ENCODE measurements at regions of chr6 and their contacts with region 1.

Region 1: DNA sequence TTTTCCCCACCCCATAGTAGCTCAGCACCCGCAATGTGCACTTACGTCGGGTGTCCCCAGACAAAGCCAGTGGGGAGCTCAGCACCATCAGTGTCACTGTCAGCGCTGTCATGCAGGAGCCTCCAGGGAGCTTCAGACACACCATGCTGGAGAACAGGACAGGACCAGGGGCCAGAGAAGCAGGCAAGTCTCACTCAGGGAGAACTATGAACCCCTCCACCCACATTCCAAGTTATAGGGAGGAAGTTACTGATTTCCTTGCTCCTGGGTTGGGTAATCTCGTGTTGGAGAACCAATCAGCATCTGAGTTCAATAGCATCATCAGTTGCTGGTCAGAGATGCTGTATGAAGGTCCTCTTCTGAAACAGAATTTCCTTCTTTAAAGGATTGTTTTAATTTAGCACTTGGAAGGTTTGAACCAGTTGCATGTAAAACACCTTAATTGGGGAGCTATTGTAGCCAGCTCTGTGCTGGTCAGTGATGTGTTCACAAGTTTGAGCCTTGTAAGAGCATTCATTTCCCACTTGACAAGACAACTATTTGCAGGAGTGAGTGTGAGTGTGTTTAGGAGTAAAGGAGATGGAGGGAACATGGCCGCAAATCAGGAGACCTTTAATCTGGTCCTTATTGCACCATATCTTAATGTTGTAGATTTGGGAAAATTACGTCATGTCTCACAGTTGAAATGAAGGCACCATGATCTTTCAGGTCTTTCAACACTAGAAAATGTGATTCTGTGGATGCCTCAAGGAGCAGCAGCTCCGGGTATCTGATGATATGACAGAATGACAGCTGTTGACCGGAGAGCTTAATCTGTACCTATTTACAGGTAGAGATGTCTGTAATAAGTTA is at the start of gene HLA-DRB1:
- DNase-seq: peak; percentile 32 to 71 (median 50)
- ATAC-seq: peak; percentile 93 to 98 (median 97)
- H3K4me3 ChIP-seq: peak within 1 kb of the TSS in 7 of 12 donors; percentile 2 to 59 (median 47)
- H3K27ac ChIP-seq: peak within 1 kb of the TSS in 7 of 12 donors; percentile 64 to 85 (median 72)
- H3K4me1 ChIP-seq: no peaks in the 10 kb centered on the region
- H3K27me3 ChIP-seq: no peaks in the 10 kb centered on the region
- CTCF ChIP-seq: no peak
- POLR2A ChIP-seq: no peak
- total RNA-seq, gene HLA-DRB1: 12.3 to 404 (median 86.3) TPM

Region 2: GRCh38 chr6:32439602-32440214 is 150.1 kb before region 1 on chr6 and contains the start of gene HLA-DRA:
- intact Hi-C with region 1: loop called in 1 of 10 experiments (anchors 10 kb)
- DNase-seq: peak in 2 of 5 donors; percentile 26 to 55
- ATAC-seq: peak; percentile 75 to 90 (median 84)
- H3K4me3 ChIP-seq: peak within 1 kb of the TSS; percentile 9 to 68 (median 56)
- H3K27ac ChIP-seq: peak within 1 kb of the TSS in 11 of 12 donors; percentile 2 to 94 (median 79)
- H3K4me1 ChIP-seq: peaks cover 0 to 46% (median 0%) of the 10 kb centered on the region in 12 donors
- H3K27me3 ChIP-seq: peaks cover 0 to 2% (median 0%) of the 10 kb centered on the region in 9 donors
- CTCF ChIP-seq: no peak
- POLR2A ChIP-seq: peak in 1 of 2 donors; percentile 24
- total RNA-seq, gene HLA-DRA: 20.0 to 1,108 (median 87.0) TPM

Region 3: DNA sequence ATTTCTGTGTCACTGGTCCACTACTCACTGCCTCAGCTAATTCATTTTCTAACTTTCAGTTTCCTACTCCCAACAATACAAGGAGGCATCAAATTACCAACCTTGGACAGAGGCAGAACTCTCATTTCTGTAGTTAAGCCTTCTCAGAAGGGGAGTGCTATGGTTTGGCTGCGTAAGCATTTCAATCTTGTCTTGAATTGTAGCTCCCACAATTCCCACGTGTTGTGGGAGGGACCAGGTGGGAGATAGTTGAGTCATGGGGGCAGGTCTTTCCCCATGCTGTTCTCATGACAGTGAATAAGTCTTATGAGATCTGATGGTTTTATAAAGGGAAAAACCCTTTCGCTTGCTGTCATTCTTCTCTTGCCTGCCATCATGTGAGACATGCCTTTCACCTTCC is 127.2 kb before region 1 on chr6:
- intact Hi-C with region 1: no loop called
- DNase-seq: no peak
- ATAC-seq: no peak
- H3K4me3 ChIP-seq: no peak overlapping the region
- H3K27ac ChIP-seq: no peak overlapping the region
- H3K4me1 ChIP-seq: no peaks in the 10 kb centered on the region
- H3K27me3 ChIP-seq: peaks cover 0 to 26% (median 0%) of the 10 kb centered on the region in 9 donors
- CTCF ChIP-seq: no peak
- POLR2A ChIP-seq: no peak

Region 4: DNA sequence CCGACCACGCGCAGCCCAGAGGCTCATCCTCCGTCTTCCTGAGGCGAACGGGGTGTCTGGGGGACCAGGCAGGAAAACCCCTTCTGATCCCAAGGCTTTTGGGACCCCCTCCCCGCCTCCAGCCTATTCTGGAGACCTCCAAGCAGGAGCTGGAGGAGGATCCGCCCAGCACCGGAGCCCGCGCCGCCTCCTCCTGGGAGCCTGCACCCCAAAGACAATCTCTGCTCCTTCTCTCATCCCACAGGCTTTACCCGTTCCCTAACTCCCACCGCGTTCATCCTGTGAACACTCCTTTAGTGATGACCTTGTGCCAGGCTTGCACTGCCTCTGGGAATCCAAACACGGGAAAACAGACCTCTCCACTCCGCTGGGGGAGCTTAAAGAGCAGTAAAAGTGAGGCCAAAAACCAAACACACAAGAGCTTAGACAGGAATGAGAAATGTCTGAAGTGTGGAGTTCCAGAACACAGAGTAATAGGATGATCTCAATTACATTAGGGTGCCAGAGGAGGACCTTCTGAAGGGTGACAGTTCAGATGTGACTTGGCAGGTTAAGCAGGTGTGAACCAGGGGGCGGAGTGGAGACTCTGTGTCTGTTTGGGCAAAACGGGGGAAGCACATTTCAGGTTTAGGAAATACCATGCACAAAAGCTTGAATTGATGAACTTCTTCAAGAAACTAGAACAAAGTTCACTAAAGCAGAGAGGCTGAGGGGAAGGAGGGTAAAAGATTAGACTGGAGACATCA is 67.3 kb before region 1 on chr6:
- intact Hi-C with region 1: loop called in 3 of 10 experiments (anchors 5 to 10 kb)
- DNase-seq: no peak
- ATAC-seq: no peak
- H3K4me3 ChIP-seq: peak overlapping the region in 4 of 12 donors; percentile 29 to 38 (median 34)
- H3K27ac ChIP-seq: peak overlapping the region in 4 of 12 donors; percentile 2 to 57 (median 36)
- H3K4me1 ChIP-seq: peaks cover 0 to 6% (median 0%) of the 10 kb centered on the region in 12 donors
- H3K27me3 ChIP-seq: peaks cover 0 to 10% (median 0%) of the 10 kb centered on the region in 9 donors
- CTCF ChIP-seq: no peak
- POLR2A ChIP-seq: no peak

Region 5: DNA sequence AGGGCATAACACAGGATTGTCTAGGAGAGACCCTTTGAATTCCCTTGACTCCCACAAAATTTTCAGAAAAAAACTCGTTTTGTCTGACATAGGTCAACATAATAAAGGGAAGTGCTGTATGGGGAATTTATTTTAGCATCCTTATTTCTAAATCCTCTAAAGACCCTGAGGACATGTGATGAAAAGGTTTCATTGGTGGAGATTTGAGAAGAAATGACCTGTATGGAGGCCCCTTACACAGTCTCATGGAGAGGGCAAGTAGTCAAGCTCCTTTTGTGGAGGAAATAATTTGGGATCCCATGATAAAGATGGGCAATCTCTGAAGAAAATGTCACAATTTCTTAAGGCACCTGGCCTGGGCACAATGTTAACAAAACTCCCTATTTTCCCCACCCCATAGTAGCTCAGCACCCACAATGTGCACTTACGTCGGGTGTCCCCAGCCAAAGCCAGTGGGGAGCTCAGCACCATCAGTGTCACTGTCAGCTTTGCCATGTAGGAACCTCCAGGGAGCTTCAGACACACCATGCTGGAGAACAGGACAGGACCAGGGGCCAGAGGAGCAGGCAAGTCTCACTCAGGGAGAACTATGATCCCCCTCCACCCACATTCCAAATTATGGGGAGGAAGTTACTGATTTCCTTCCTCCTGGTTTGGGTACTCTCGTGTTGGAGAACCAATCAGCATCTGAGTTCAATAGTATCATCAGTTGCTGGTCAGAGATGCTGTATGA is 60.0 kb before region 1 on chr6 and contains the start of gene HLA-DRB5:
- intact Hi-C with region 1: loop called in 4 of 10 experiments (anchors 5 to 10 kb)
- DNase-seq: peak in 3 of 5 donors; percentile 33 to 63 (median 52)
- ATAC-seq: peak; percentile 58 to 99 (median 78)
- H3K4me3 ChIP-seq: peak within 1 kb of the TSS in 6 of 12 donors; percentile 12 to 56 (median 46)
- H3K27ac ChIP-seq: peak within 1 kb of the TSS in 10 of 12 donors; percentile 43 to 84 (median 62)
- H3K4me1 ChIP-seq: no peaks in the 10 kb centered on the region
- H3K27me3 ChIP-seq: no peaks in the 10 kb centered on the region
- CTCF ChIP-seq: no peak
- POLR2A ChIP-seq: no peak
- total RNA-seq, gene HLA-DRB5: 1.3 to 93.6 (median 50.7) TPM

Region 6: DNA sequence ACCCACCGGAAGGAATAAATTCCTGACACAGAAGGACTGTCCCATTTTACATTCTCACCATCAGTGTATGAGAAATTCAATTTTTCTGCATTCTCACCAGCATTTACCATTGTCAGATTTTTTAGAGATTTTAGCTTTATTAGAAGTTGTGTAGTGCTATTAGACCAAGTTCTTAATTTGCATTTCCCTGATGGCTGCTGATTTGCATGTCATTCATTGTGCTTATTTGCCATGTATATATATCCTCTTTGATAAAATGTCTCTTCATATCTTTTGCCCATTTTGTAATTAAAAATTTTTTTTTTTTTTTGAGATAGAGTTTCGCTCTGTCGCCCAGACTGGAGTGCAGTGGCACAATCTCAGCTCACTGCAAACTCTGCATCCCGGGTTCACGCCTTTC is 50.0 kb before region 1 on chr6:
- intact Hi-C with region 1: loop called in 2 of 10 experiments (anchors 5 to 10 kb)
- DNase-seq: no peak
- ATAC-seq: no peak
- H3K4me3 ChIP-seq: no peak overlapping the region
- H3K27ac ChIP-seq: no peak overlapping the region
- H3K4me1 ChIP-seq: no peaks in the 10 kb centered on the region
- H3K27me3 ChIP-seq: no peaks in the 10 kb centered on the region
- CTCF ChIP-seq: no peak
- POLR2A ChIP-seq: no peak

Region 7: GRCh38 chr6:32666420-32667300 is 76.8 kb after region 1 on chr6 and contains the start of gene HLA-DQB1:
- intact Hi-C with region 1: loop called in 1 of 10 experiments (anchors 5 kb)
- DNase-seq: peak in 2 of 5 donors; percentile 41 to 57
- ATAC-seq: peak; percentile 70 to 92 (median 88)
- H3K4me3 ChIP-seq: peak within 1 kb of the TSS in 9 of 12 donors; percentile 20 to 62 (median 37)
- H3K27ac ChIP-seq: peak within 1 kb of the TSS in 8 of 12 donors; percentile 59 to 81 (median 72)
- H3K4me1 ChIP-seq: peaks cover 0 to 10% (median 0%) of the 10 kb centered on the region in 12 donors
- H3K27me3 ChIP-seq: peaks cover 0 to 12% (median 0%) of the 10 kb centered on the region in 9 donors
- CTCF ChIP-seq: no peak
- POLR2A ChIP-seq: no peak
- total RNA-seq, gene HLA-DQB1: 0.38 to 86.5 (median 14.9) TPM